Left cardiac atrium (tissue), 4 donors: ENCODE measurements at regions of chr20 and their contacts with region 1.

Region 1: DNA sequence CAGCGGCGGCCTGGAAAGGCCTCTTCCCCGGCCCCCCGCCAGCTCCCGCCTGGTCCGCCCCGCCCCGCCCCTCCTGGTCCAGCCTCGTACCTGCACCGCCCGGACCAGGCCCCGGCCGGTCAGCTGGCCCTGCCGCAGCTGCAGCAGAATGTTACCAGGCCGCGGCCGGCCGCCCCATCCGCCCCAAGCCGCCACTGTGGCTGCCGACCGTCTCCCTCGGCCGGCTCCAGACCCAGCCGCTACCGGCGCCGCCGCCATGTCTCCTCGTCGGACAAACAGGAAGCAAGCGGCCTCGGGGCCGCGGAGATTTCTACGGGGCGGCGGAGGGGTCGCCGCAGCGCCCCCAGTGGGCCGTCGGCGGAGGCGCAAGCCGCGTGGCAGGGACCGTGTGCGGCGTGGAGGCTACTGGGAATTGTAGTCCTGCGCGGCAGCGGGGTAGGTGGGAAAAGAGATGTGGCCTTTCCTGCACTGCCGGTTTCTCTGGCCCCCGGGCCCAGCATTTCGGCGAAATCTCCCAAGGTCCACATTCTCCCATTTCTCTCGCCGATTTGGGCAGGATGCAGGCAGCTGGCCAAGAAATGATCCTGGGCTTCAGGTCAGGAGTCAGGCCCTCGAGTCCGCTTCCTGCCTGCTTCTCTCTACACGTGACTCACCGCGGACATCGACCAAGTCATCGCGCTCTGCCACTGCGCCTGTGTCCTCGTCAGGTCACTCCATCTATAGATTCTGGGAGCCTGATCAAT is at the start of gene TRPC4AP:
- DNase-seq: peak; percentile 92
- ATAC-seq: peak; percentile 96
- total RNA-seq, gene TRPC4AP: 32.6 to 47.1 TPM

Region 2: DNA sequence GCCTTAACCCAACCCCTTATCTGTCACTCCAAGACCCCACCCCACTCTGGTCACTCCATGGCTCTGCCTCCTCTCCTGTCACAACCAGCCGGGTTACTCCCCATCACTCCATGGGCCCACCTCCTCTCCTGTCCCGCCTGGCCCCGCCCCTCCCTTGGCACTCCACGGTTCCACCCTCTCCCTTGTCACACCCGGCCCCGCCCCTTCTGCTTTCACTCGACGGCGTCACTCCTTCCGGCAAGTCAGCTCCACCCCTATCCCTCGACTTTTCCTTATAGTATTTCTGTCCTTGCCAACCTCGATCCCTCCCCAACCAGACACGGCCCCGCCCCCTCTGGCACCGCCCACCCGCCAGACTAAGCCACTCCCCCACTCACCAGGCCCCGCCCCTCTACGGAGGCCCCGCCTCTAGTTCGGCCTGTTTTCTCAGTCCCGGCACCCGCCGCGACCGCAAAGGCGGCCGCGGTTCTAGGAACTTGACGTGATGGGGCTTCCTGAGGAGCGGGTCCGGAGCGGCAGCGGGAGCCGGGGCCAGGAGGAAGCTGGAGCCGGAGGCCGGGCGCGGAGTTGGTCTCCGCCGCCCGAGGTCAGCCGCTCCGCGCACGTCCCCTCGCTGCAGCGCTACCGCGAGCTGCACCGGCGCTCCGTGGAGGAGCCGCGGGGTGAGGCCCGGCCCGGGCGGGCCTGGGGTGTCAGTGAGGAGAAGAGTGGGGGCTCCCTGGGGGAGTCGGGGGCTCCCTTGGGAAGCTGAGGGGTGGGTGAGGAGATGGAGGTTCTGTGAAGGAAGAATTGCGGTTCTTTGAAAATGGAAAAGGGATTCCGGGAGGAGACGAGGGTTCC is 216.3 kb before region 1 on chr20 and contains the start of gene ACSS2:
- intact Hi-C with region 1: loop called (anchors 10 kb)
- DNase-seq: peak; percentile 99
- ATAC-seq: peak; percentile 89 to 93
- total RNA-seq, gene ACSS2: 80.8 to 118 TPM

Region 3: GRCh38 chr20:35129647-35130069 is 37.0 kb after region 1 on chr20:
- intact Hi-C with region 1: loop called in 1 of 2 experiments (anchors 5 kb)
- DNase-seq: no peak
- ATAC-seq: no peak

Region 4: DNA sequence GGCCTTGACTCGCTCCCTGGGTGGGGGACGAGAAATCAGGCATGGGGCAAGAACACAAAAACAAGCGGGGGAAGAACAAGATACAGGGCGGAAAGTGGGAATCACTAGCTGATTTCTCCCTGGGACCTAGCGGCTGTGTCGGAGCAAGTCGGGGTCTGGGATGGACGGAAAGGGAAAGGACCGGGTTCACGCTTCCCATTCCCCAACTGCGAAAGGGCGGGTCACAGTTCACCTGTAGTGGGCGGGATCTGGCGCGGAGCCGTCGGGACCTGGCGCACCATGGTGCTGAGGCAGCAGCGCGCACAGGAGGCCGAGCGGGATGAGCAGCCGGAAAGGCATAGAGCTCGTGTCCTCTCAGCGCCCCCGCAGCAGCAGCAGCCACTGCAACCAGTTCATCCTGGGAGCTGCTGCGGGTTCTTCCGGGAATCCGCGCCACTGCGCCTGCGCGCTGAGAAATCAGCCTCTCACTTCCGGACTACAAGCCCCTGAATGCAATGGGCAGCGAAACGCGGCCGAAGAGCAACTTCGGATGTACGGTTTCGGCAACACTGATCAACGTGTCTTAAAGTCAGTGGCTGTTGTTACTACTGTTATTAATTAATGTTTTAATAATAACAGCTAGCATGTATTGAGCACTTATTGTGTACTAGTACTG is 54.4 kb after region 1 on chr20 and contains the start of gene EDEM2:
- intact Hi-C with region 1: loop called in 1 of 2 experiments (anchors 5 kb)
- DNase-seq: peak; percentile 96
- ATAC-seq: peak; percentile 95 to 96
- total RNA-seq, gene EDEM2: 16.6 to 25.6 TPM

Region 5: GRCh38 chr20:35207950-35208611 is 115.4 kb after region 1 on chr20:
- intact Hi-C with region 1: loop called (anchors 2 to 10 kb)
- DNase-seq: peak; percentile 86
- ATAC-seq: peak; percentile 95 to 96

Region 6: GRCh38 chr20:35235881-35236280 is 143.2 kb after region 1 on chr20:
- intact Hi-C with region 1: no loop called
- DNase-seq: peak; percentile 45
- ATAC-seq: peak in 1 of 2 donors; percentile 15

Region 7: GRCh38 chr20:35277531-35278395 is 185.1 kb after region 1 on chr20 and contains the start of gene MMP24OS:
- intact Hi-C with region 1: loop called in 1 of 2 experiments (anchors 10 kb)
- DNase-seq: peak; percentile 92
- ATAC-seq: peak; percentile 94 to 95
- total RNA-seq, gene MMP24OS: 46.9 to 53.2 TPM